Spleen (tissue), 13 donors: ENCODE measurements at regions of chr1 and their contacts with region 1.

Region 1: DNA sequence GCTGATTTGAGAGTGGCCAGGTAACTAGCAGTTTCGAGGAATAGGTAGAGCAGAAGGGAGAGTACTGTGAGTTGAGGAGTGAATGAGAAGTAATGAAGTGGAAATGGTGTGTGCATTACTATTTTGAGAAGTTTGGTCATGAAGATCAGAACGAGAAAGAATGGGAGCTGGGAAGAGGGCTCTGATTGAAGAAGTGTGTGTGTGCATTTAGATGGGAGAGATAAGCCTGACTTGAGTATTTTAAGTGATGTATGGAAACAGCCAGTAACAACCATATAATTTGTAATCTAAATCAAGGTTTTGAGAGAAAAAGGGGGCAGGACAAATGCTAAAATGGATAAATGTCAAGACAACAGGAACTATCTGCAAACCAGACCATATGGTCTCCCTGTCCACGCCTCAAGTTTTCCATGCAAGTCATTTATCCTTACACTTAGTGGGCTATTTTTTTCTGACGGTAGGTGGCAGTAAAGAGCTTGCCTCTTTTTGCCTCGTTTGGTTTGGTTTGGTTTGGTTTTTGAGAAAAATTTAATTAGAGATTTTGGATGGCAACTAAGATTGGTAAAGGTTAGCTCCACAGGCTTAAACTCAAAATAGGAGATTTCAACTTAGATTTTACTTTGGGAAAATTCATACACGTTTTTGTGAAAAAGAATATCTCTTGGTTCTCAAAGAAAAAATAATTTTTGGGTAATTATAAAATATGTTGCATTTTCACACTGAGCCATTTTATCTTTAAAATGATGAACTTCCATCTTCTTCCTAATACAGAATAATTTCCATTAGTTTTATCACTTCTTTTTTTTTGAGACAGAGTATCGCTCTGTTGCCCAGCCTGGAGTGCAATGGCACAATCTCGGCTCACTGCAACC is 9.5 kb upstream of the B3GALNT2 start:
- DNase-seq: no peak
- H3K4me3 ChIP-seq: no peak overlapping the region
- H3K27ac ChIP-seq: no peak overlapping the region
- H3K4me1 ChIP-seq: peaks cover 0 to 6% (median 0%) of the 10 kb centered on the region in 6 donors
- H3K27me3 ChIP-seq: no peaks in the 10 kb centered on the region
- CTCF ChIP-seq: peak; percentile 57 to 90 (median 83)
- POLR2A ChIP-seq: no peak

Region 2: GRCh38 chr1:235588916-235589515 is 75.3 kb after region 1 on chr1:
- intact Hi-C with region 1: no loop called
- DNase-seq: peak; percentile 47
- H3K4me3 ChIP-seq: no peak overlapping the region
- H3K27ac ChIP-seq: no peak overlapping the region
- H3K4me1 ChIP-seq: no peaks in the 10 kb centered on the region
- H3K27me3 ChIP-seq: peaks cover 0 to 24% (median 0%) of the 10 kb centered on the region in 7 donors
- CTCF ChIP-seq: no peak
- POLR2A ChIP-seq: no peak

Region 3: GRCh38 chr1:235601104-235601503 is 87.4 kb after region 1 on chr1:
- intact Hi-C with region 1: loop called (anchors 10 kb)
- DNase-seq: peak; percentile 47
- H3K4me3 ChIP-seq: no peak overlapping the region
- H3K27ac ChIP-seq: no peak overlapping the region
- H3K4me1 ChIP-seq: no peaks in the 10 kb centered on the region
- H3K27me3 ChIP-seq: no peaks in the 10 kb centered on the region
- CTCF ChIP-seq: peak in 7 of 11 experiments; percentile 12 to 55 (median 41)
- POLR2A ChIP-seq: no peak

Region 4: GRCh38 chr1:235971571-235972310 is 458.0 kb after region 1 on chr1:
- intact Hi-C with region 1: loop called (anchors 5 kb)
- DNase-seq: peak; percentile 95
- H3K4me3 ChIP-seq: peak overlapping the region in 7 of 8 donors; percentile 6 to 58 (median 27)
- H3K27ac ChIP-seq: peak overlapping the region; percentile 58 to 95 (median 90)
- H3K4me1 ChIP-seq: peaks cover 10 to 40% (median 21%) of the 10 kb centered on the region in 6 donors
- H3K27me3 ChIP-seq: no peaks in the 10 kb centered on the region
- CTCF ChIP-seq: peak; percentile 85 to 97 (median 91)
- POLR2A ChIP-seq: peak in 1 of 3 donors; percentile 21